ENCODE measurements at regions of chr4 and their contacts with region 1.

Region 1: GRCh38 chr4:26410385-26411293 is 79.6 kb downstream of the CCKAR start:
- DNase-seq: peak; percentile 33
- ATAC-seq: peak; percentile 61
- H3K4me3 Mint-ChIP-seq: no peak overlapping the region
- H3K27ac Mint-ChIP-seq: no peak overlapping the region
- H3K4me1 Mint-ChIP-seq: peaks cover 7% of the 10 kb centered on the region
- H3K27me3 Mint-ChIP-seq: no peaks in the 10 kb centered on the region
- CTCF ChIP-seq: peak; percentile 85

Region 2: DNA sequence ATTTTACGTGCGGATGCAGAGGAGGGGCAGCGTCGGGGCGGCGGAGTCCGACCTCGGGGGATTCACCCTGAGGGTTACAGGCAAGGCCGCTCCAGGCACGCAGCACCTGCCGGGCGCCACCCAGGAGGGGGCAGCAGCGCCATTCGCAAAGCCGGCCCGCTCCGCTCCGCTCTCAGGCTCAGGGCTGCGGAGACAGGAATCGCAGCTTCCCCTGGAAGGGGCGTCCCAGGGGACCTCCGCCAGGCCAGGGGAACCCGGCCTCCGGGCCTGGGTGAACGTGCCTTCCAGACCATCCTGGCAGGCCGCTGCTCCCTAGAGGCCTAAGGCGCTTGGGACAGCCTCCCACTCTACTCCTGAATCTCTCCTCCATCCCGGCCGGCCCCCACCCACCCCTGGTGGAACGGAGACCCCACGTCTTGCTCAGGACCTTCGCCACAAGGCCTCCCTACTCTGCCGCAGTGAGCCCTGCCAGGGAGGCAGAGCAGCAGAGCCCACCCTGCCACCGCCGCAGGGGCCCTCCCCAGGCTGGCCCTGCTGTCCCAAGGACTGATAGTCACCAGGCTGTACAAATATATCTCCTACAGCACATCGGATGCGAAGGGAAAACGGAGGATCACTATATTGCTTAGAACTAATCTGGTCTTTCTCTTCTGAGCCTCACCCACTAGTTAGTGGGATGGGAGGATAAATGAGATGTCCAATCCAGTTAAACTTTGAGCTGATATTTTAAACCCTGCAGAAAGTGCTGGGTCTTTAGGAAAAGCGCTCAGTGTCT is 381.7 kb before region 1 on chr4:
- CTCF ChIA-PET with region 1: interaction called, 25 read pairs
- POLR2A ChIA-PET with region 1: no interaction called
- intact Hi-C with region 1: loop called (anchors 1 kb)
- DNase-seq: peak; percentile 74
- ATAC-seq: peak; percentile 99
- H3K4me3 Mint-ChIP-seq: no peak overlapping the region
- H3K27ac Mint-ChIP-seq: no peak overlapping the region
- H3K4me1 Mint-ChIP-seq: peaks cover 9% of the 10 kb centered on the region
- H3K27me3 Mint-ChIP-seq: peaks cover 18% of the 10 kb centered on the region
- CTCF ChIP-seq: peak; percentile 80

Measured in activated CD8-positive, alpha-beta T cell treated with anti-CD3 and anti-CD28 coated beads for 36 hours (primary cell).